Uterus (tissue), 4 donors: ENCODE measurements at regions of chr15 and their contacts with region 1.

Region 1: DNA sequence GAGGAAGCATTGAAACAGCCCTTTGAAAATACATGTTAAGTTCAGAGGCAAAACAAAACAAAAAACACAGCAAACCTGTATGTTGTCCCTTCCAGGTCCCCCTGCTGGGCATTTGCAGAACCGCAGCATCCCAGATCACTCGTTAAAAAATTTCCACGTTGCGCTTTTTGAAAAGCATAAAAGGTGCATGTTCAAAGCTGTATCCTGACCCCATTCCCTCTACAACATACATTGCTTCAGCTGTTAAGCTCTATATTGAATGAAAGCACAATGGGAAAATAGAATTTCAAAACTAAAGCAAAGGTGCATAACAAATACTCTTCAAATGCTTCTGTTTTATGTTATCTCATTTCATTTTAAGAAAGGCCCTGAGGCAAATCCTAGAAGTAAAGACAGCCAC is 328.3 kb downstream of the THSD4 start:
- DNase-seq: peak; percentile 67 to 69
- H3K4me3 ChIP-seq: no peak overlapping the region
- H3K27ac ChIP-seq: peak overlapping the region in 1 of 2 donors; percentile 65
- H3K4me1 ChIP-seq: no peaks in the 10 kb centered on the region
- H3K27me3 ChIP-seq: no peaks in the 10 kb centered on the region
- CTCF ChIP-seq: peak; percentile 77 to 89 (median 83)
- POLR2A ChIP-seq: no peak

Region 2: DNA sequence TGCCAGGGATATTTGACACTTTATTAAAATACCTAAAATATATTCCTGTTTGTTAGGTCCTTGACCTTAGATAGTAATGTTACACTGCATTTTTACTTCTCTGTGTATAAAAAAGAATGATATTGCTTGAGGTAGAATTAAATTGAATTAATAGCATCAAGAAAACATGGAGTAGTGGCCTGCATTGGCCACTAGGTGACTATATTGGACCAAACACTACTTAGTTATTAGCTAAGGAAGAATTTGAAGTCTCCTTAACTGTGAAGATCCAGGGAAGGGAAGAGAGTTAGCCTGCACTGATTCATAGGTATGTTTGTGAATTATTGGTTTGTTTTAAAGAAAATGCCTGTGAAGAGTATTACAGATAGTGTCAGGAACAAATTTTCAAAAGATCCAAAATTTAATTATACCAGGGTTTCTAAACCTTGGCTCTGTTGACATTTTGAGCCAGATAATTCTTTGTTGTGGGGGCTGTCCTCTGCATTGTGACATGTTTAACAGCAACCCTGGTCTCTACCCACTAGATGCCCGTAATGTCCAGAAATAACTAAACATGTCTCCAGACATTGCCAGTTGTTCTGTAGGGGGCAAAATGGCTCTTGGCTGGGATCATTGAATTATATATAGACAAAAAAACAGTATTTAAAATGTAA is 431.9 kb before region 1 on chr15:
- intact Hi-C with region 1: loop called (anchors 5 kb)
- DNase-seq: peak in 1 of 2 donors; percentile 28
- H3K4me3 ChIP-seq: no peak overlapping the region
- H3K27ac ChIP-seq: no peak overlapping the region
- H3K4me1 ChIP-seq: no peaks in the 10 kb centered on the region
- H3K27me3 ChIP-seq: no peaks in the 10 kb centered on the region
- CTCF ChIP-seq: peak; percentile 73 to 81 (median 79)
- POLR2A ChIP-seq: no peak

Region 3: DNA sequence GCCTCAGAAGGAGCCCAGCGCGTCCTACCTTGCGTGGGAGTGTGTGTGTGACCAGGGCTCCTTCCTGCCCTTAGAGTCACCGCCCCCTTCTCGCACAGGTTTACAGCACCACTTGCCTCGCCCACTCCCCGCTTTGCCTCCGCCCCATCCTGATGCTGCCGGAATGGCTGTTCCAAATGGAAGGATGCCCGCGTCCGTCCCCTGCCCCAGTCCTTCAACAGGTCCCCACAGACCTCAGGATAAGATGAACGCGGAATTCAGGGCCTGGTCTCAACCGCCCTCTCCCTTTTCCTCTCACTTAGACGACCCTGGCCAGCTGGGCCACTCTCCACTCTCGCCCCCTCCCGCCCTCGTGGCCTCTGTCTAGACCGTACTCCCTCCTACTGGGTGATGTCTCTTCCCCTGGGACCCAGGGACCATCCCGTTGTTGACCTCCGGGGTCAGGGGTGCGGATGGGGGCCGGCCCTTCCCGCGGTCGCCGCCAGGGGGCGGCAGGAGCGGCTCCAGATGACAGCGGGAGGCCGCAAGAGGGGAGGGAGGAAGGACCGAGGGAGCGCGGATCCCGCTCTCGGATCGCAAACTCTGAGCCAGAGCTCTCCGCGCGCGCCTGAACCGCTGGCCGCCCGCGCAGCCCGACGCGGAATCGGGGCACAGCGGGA is 328.5 kb before region 1 on chr15 and contains the start of gene THSD4:
- intact Hi-C with region 1: loop called (anchors 5 kb)
- DNase-seq: peak; percentile 71 to 79
- H3K4me3 ChIP-seq: peak within 1 kb of the TSS; percentile 49 to 53
- H3K27ac ChIP-seq: peak within 1 kb of the TSS; percentile 83 to 90
- H3K4me1 ChIP-seq: peaks cover 0 to 4% of the 10 kb centered on the region in 2 donors
- H3K27me3 ChIP-seq: no peaks in the 10 kb centered on the region
- CTCF ChIP-seq: peak; percentile 95 to 98 (median 96)
- POLR2A ChIP-seq: peak in 1 of 2 donors; percentile 37
- total RNA-seq, gene THSD4: 7.1 to 144 (median 35.4) TPM

Region 4: GRCh38 chr15:71201477-71201876 is 242.1 kb before region 1 on chr15:
- intact Hi-C with region 1: no loop called
- DNase-seq: no peak
- H3K4me3 ChIP-seq: no peak overlapping the region
- H3K27ac ChIP-seq: no peak overlapping the region
- H3K4me1 ChIP-seq: no peaks in the 10 kb centered on the region
- H3K27me3 ChIP-seq: no peaks in the 10 kb centered on the region
- CTCF ChIP-seq: no peak
- POLR2A ChIP-seq: no peak

Region 5: GRCh38 chr15:71357321-71357732 is 86.2 kb before region 1 on chr15:
- intact Hi-C with region 1: no loop called
- DNase-seq: peak; percentile 52 to 65
- H3K4me3 ChIP-seq: no peak overlapping the region
- H3K27ac ChIP-seq: peak overlapping the region; percentile 3 to 60
- H3K4me1 ChIP-seq: peaks cover 3 to 7% of the 10 kb centered on the region in 2 donors
- H3K27me3 ChIP-seq: no peaks in the 10 kb centered on the region
- CTCF ChIP-seq: no peak
- POLR2A ChIP-seq: no peak